Mammary epithelial cell (primary cell): ENCODE measurements at regions of chr10 and their contacts with region 1.

Region 1: GRCh38 chr10:124660404-124661125 is 83.6 kb downstream of the FAM53B start:
- DNase-seq: no peak
- H3K4me3 ChIP-seq: no peak overlapping the region
- H3K27ac ChIP-seq: no peak overlapping the region
- H3K4me1 ChIP-seq: no peaks in the 10 kb centered on the region
- H3K27me3 ChIP-seq: no peaks in the 10 kb centered on the region
- CTCF ChIP-seq: no peak

Region 2: DNA sequence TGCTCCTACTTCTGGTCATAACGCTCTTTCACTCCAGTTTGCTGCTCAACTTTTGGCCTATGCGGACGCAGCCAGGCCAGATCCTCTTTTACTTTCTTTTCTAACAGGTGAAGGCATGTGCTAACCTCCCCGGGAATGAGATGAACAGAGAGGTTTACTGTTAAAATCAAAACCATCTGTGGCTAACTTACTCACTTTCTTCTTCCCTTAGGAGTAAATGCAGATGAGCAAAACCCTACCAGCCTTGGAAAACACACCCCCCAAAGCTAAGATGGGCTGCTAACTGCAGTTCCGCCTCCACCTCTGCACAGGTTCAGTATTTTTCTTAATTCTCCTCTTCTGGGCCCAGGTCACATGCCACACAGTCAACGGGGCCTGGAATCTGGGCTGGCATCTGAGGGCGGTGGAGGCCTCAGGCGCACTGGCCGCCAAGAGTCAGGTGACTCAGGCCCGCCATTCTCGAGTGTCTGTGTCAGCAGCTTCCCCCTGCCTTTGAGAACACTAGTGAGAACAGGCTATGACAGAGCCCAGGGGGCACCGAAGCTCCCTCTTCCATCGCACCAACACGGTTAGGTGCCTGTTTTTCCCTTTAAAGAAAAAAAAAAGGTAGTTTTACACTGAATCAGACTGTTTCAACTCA is 72.5 kb after region 1 on chr10:
- CTCF ChIA-PET with region 1: no interaction called
- dilution Hi-C with region 1: loop called (anchors 5 kb)
- in situ Hi-C with region 1: no loop called
- intact Hi-C with region 1: no loop called
- DNase-seq: peak; percentile 76
- H3K4me3 ChIP-seq: no peak overlapping the region
- H3K27ac ChIP-seq: peak overlapping the region; percentile 77
- H3K4me1 ChIP-seq: peaks cover 50% of the 10 kb centered on the region
- H3K27me3 ChIP-seq: no peaks in the 10 kb centered on the region
- CTCF ChIP-seq: no peak